ENCODE measurements at regions of chr7 and their contacts with region 1.

Region 1: GRCh38 chr7:75914730-75915585 is at the start of gene POR:
- DNase-seq: peak; percentile 94 to 100 (median 98)
- H3K4me3 ChIP-seq: peak within 1 kb of the TSS; percentile 79 to 81
- H3K4me3 Mint-ChIP-seq: peak within 1 kb of the TSS; percentile 91 to 95 (median 94)
- H3K27ac ChIP-seq: peak within 1 kb of the TSS; percentile 97
- H3K27ac Mint-ChIP-seq: peak within 1 kb of the TSS; percentile 92 to 98 (median 97)
- H3K4me1 ChIP-seq: peaks cover 34% of the 10 kb centered on the region
- H3K4me1 Mint-ChIP-seq: peaks cover 21 to 46% (median 35%) of the 10 kb centered on the region in 4 donors
- H3K27me3 ChIP-seq: no peaks in the 10 kb centered on the region
- H3K27me3 Mint-ChIP-seq: no peaks in the 10 kb centered on the region
- total RNA-seq, gene POR: 60.2 to 71.1 TPM

Region 2: GRCh38 chr7:75738987-75739795 is 175.8 kb before region 1 on chr7:
- CTCF ChIA-PET with region 1: no interaction called
- POLR2A ChIA-PET with region 1: interaction called, 8 read pairs
- intact Hi-C with region 1: loop called (anchors 2 kb)
- DNase-seq: peak; percentile 99
- H3K4me3 ChIP-seq: peak overlapping the region; percentile 19 to 97
- H3K4me3 Mint-ChIP-seq: peak overlapping the region; percentile 97 to 100 (median 98)
- H3K27ac ChIP-seq: peak overlapping the region; percentile 79
- H3K27ac Mint-ChIP-seq: peak overlapping the region; percentile 94 to 99 (median 98)
- H3K4me1 ChIP-seq: peaks cover 18% of the 10 kb centered on the region
- H3K4me1 Mint-ChIP-seq: peaks cover 7 to 21% (median 13%) of the 10 kb centered on the region in 4 donors
- H3K27me3 ChIP-seq: no peaks in the 10 kb centered on the region
- H3K27me3 Mint-ChIP-seq: peaks cover 1% of the 10 kb centered on the region in 2 donors

Region 3: GRCh38 chr7:75951511-75951917 is 36.6 kb after region 1 on chr7:
- CTCF ChIA-PET with region 1: no interaction called
- POLR2A ChIA-PET with region 1: no interaction called
- intact Hi-C with region 1: no loop called
- DNase-seq: no peak
- H3K4me3 ChIP-seq: no peak overlapping the region
- H3K4me3 Mint-ChIP-seq: no peak overlapping the region
- H3K27ac ChIP-seq: no peak overlapping the region
- H3K27ac Mint-ChIP-seq: no peak overlapping the region
- H3K4me1 ChIP-seq: no peaks in the 10 kb centered on the region
- H3K4me1 Mint-ChIP-seq: peaks cover 4 to 9% (median 7%) of the 10 kb centered on the region in 4 donors
- H3K27me3 ChIP-seq: no peaks in the 10 kb centered on the region
- H3K27me3 Mint-ChIP-seq: no peaks in the 10 kb centered on the region

Region 4: GRCh38 chr7:75994388-75995051 is 79.6 kb after region 1 on chr7 and contains the start of gene TMEM120A:
- CTCF ChIA-PET with region 1: no interaction called
- POLR2A ChIA-PET with region 1: interaction called, 23 read pairs
- intact Hi-C with region 1: loop called (anchors 2 kb)
- DNase-seq: peak; percentile 90 to 93 (median 91)
- H3K4me3 ChIP-seq: peak within 1 kb of the TSS; percentile 28 to 92
- H3K4me3 Mint-ChIP-seq: peak within 1 kb of the TSS; percentile 66 to 82 (median 78)
- H3K27ac ChIP-seq: peak within 1 kb of the TSS; percentile 62
- H3K27ac Mint-ChIP-seq: peak within 1 kb of the TSS in 4 of 7 donors; percentile 15 to 81 (median 44)
- H3K4me1 ChIP-seq: peaks cover 26% of the 10 kb centered on the region
- H3K4me1 Mint-ChIP-seq: peaks cover 17 to 45% (median 29%) of the 10 kb centered on the region in 4 donors
- H3K27me3 ChIP-seq: no peaks in the 10 kb centered on the region
- H3K27me3 Mint-ChIP-seq: no peaks in the 10 kb centered on the region
- total RNA-seq, gene TMEM120A: 27.4 to 31.2 TPM

Region 5: DNA sequence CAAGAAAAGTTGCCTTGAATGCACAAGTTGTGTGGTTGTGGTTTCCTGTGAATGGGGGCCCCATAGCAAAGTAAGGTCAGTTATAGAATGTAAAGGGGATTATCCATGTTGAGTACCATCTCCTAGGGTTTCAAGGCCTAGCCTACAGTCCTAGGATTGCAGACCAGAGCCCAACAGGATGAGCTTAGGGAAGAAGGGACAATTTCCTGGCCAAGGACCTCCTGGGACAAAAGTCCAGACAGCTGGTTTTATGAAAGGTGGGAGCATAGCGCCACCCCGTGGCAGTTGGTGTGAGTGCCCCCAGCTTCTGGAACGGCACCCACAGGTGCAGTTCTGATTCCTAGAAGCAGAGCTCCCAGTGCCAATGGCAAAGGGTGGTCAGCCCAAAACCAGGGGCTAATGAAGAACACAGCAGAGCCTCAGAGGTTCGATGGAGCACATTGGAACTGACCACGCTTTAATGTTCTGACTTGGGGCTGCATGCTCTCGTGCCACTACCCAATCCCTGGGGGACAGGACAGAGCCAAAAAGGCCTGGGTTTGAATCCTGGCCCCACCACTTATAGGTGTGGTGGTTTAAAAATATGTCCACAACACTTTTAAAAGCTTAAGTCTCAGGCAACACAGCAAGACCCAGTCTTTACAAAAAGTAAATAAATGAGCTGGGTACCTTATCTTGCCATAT is 105.2 kb after region 1 on chr7:
- CTCF ChIA-PET with region 1: interaction called, 7 read pairs
- POLR2A ChIA-PET with region 1: interaction called, 12 read pairs
- intact Hi-C with region 1: no loop called
- DNase-seq: peak; percentile 56 to 70 (median 60)
- H3K4me3 ChIP-seq: no peak overlapping the region
- H3K4me3 Mint-ChIP-seq: no peak overlapping the region
- H3K27ac ChIP-seq: no peak overlapping the region
- H3K27ac Mint-ChIP-seq: peak overlapping the region in 3 of 7 donors; percentile 30 to 59 (median 53)
- H3K4me1 ChIP-seq: peaks cover 12% of the 10 kb centered on the region
- H3K4me1 Mint-ChIP-seq: peaks cover 7 to 14% (median 10%) of the 10 kb centered on the region in 4 donors
- H3K27me3 ChIP-seq: no peaks in the 10 kb centered on the region
- H3K27me3 Mint-ChIP-seq: no peaks in the 10 kb centered on the region

Region 6: DNA sequence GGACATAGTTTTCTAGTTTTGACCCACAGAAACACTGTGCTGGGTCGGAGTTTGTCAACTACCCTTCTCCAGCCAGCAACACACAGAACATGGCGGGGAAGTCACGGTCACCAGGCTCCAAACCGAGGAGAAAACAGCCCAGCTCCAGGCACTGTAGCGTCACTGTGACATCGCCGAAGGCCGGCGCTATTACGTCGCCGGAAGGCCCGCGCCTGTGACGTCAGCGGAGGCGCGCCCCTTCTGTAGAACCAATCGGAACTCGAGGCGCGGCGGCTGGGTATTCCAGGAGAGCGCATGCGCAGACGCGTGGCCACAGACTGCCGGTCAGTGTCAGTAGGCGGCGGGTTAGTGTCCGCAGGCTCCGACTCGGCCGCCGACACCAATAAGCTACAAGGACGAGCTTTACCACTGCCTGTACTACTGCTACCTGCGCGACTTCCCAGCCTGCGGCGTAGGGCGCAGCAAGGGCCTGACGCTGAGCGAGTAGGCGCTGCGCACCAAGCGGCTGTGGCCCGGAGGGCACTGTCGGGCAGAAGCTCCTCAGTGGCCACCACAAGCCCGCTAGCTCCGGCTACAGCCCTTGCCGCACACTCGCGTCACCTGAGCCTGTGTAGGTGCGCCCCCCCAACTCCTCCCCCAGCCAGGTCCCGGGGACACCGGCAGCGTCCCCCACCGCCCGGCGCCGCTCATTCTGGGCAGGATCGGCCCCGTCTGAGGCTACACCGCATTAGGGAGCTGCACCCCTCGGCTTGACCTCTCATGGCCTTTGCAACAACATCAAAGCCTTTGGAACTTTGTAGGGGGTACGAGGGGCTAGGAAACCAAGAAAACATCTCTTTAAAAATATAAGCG is 251.7 kb after region 1 on chr7:
- CTCF ChIA-PET with region 1: no interaction called
- POLR2A ChIA-PET with region 1: no interaction called
- intact Hi-C with region 1: loop called (anchors 1 kb)
- DNase-seq: peak; percentile 88 to 92 (median 92)
- H3K4me3 ChIP-seq: peak overlapping the region; percentile 47 to 75
- H3K4me3 Mint-ChIP-seq: peak overlapping the region; percentile 87 to 93 (median 90)
- H3K27ac ChIP-seq: peak overlapping the region; percentile 66
- H3K27ac Mint-ChIP-seq: peak overlapping the region; percentile 90 to 97 (median 95)
- H3K4me1 ChIP-seq: peaks cover 6% of the 10 kb centered on the region
- H3K4me1 Mint-ChIP-seq: peaks cover 2 to 8% (median 5%) of the 10 kb centered on the region in 4 donors
- H3K27me3 ChIP-seq: no peaks in the 10 kb centered on the region
- H3K27me3 Mint-ChIP-seq: no peaks in the 10 kb centered on the region